Heart right ventricle (tissue), 16 donors: ENCODE measurements at regions of chr5 and their contacts with region 1.

Region 1: DNA sequence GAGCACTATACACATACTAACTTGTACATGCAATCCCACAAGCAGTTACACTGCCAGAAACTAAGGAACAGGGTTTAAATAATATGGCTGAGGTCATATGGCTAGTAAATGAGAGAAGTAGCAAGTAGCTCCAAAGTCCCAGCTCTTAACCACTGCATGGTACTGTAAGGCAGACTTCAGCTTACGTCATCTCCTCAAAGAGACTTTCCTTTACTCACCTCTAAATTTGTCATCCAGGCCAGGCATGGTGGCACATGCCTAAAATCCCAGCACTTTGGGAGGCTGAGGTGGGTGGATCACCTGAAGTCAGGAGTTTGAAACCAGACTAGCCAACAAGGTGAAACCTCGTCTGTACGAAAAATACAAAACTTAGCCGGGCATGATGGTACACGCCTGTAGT is 20.4 kb upstream of the SELENOP start:
- DNase-seq: no peak
- ATAC-seq: no peak
- H3K4me3 ChIP-seq: no peak overlapping the region
- H3K27ac ChIP-seq: no peak overlapping the region
- H3K4me1 ChIP-seq: peaks cover 0 to 5% (median 0%) of the 10 kb centered on the region in 9 donors
- H3K27me3 ChIP-seq: no peaks in the 10 kb centered on the region
- CTCF ChIP-seq: no peak

Region 2: DNA sequence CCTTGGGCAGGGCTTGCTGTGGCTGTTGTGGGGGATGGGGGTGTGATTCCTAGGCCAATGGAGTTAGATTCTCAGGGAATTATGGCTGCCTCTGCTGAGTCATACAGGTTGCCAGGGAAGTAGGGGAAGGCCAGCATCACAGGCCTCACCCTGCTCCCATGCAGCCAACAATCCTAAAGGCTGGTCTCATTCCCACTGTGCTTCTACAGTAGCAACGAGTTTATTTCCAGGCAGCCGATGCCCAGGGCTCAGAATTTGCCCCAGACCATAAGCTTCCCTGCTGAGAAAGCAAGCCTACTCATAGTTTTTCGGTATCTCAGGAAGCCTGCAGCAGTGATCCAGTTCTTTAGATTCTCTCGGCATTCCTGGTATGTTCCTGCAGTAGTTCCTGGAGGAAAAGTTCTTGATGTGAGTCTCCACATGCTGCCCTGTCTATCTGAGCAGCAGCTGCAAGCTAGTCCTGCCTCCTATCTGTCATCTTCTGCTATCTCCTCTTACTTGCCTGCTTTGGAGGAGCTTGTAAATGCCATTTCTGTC is 38.9 kb after region 1 on chr5:
- intact Hi-C with region 1: loop called in 1 of 10 experiments (anchors 5 kb)
- DNase-seq: no peak
- ATAC-seq: no peak
- H3K4me3 ChIP-seq: no peak overlapping the region
- H3K27ac ChIP-seq: no peak overlapping the region
- H3K4me1 ChIP-seq: peaks cover 0 to 8% (median 0%) of the 10 kb centered on the region in 9 donors
- H3K27me3 ChIP-seq: no peaks in the 10 kb centered on the region
- CTCF ChIP-seq: no peak